Kidney (tissue), 22 donors: ENCODE measurements at regions of chr7 and their contacts with region 1.

Region 1: GRCh38 chr7:130721486-130722280 is 12.3 kb downstream of the KLF14 start:
- DNase-seq: peak; percentile 84 to 95 (median 90)
- H3K4me3 ChIP-seq: no peak overlapping the region
- H3K27ac ChIP-seq: no peak overlapping the region
- H3K4me1 ChIP-seq: no peaks in the 10 kb centered on the region
- H3K27me3 ChIP-seq: no peaks in the 10 kb centered on the region
- CTCF ChIP-seq: peak; percentile 59

Region 2: GRCh38 chr7:130069978-130070860 is 651.5 kb before region 1 on chr7 and contains the start of gene KLHDC10:
- intact Hi-C with region 1: loop called (anchors 10 kb)
- DNase-seq: peak; percentile 98 to 99 (median 99)
- H3K4me3 ChIP-seq: peak within 1 kb of the TSS; percentile 69 to 98 (median 97)
- H3K27ac ChIP-seq: peak within 1 kb of the TSS; percentile 75 to 81
- H3K4me1 ChIP-seq: peaks cover 3 to 15% (median 10%) of the 10 kb centered on the region in 3 donors
- H3K27me3 ChIP-seq: no peaks in the 10 kb centered on the region
- CTCF ChIP-seq: peak; percentile 8
- total RNA-seq, gene KLHDC10: 38.9 TPM

Region 3: DNA sequence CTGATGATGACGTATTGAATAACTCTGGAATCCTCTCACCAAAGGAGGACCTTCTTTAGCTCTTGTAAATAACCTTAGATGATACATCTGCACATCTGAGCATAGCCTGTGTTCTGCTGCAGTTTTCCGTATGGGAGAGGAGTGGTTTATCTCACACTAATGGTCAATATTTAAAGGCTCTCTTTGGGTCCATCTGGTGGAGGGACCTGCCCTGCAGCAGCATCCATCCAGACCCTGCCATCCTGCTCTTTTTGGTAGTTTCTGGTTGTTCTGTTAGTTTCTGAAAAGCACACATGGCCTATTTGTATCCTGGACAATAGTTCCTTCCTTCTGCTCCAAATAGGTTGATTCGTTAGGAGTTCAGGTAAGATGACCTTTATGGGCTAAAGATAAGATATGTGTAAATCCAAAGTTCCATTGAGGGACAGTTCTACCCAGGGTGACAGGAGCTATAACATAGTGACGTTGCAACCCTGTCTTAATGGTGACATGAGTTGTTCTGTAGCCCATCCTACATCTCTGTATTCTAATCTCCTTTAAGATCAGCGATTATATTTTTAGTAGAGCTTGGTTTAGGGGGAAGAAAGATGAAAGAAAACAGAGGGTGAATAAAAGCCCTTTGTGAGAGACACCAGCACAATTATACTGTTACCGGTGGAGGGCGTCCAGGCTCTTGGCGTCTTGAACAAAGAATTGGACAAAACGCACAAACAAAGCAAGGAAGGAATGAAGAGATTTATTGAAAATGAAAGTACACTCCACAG is 72.4 kb after region 1 on chr7:
- intact Hi-C with region 1: no loop called
- DNase-seq: peak in 1 of 5 donors; percentile 25
- H3K4me3 ChIP-seq: no peak overlapping the region
- H3K27ac ChIP-seq: no peak overlapping the region
- H3K4me1 ChIP-seq: no peaks in the 10 kb centered on the region
- H3K27me3 ChIP-seq: no peaks in the 10 kb centered on the region
- CTCF ChIP-seq: no peak